ENCODE measurements at regions of chr1 and their contacts with region 1.

Region 1: GRCh38 chr1:201709564-201710295 is 119.2 kb upstream of the IPO9 start:
- DNase-seq: peak; percentile 39 to 66 (median 57)
- H3K4me3 ChIP-seq: no peak overlapping the region
- H3K27ac ChIP-seq: no peak overlapping the region
- H3K4me1 ChIP-seq: peaks cover 0 to 29% (median 8%) of the 10 kb centered on the region in 4 experiments
- H3K27me3 ChIP-seq: no peaks in the 10 kb centered on the region

Region 2: GRCh38 chr1:201399352-201400126 is 310.2 kb before region 1 on chr1:
- CTCF ChIA-PET with region 1: no interaction called
- POLR2A ChIA-PET with region 1: no interaction called
- DNase-seq: peak in 1 of 3 donors; percentile 11
- H3K4me3 ChIP-seq: peak overlapping the region in 3 of 7 experiments; percentile 38 to 57 (median 44)
- H3K27ac ChIP-seq: no peak overlapping the region
- H3K4me1 ChIP-seq: peaks cover 0 to 6% (median 3%) of the 10 kb centered on the region in 4 experiments
- H3K27me3 ChIP-seq: peaks cover 12 to 70% (median 40%) of the 10 kb centered on the region in 5 experiments

Region 3: GRCh38 chr1:201447911-201448871 is 261.5 kb before region 1 on chr1:
- CTCF ChIA-PET with region 1: no interaction called
- POLR2A ChIA-PET with region 1: no interaction called
- DNase-seq: peak; percentile 71 to 77 (median 72)
- H3K4me3 ChIP-seq: no peak overlapping the region
- H3K27ac ChIP-seq: no peak overlapping the region
- H3K4me1 ChIP-seq: peaks cover 0 to 20% (median 12%) of the 10 kb centered on the region in 4 experiments
- H3K27me3 ChIP-seq: peaks cover 0 to 1% (median 0%) of the 10 kb centered on the region in 5 experiments

Region 4: GRCh38 chr1:201530741-201531531 is 178.8 kb before region 1 on chr1:
- CTCF ChIA-PET with region 1: interaction called, 53 read pairs
- POLR2A ChIA-PET with region 1: no interaction called
- DNase-seq: peak; percentile 77 to 83 (median 79)
- H3K4me3 ChIP-seq: peak overlapping the region in 1 of 7 experiments; percentile 14
- H3K27ac ChIP-seq: no peak overlapping the region
- H3K4me1 ChIP-seq: peaks cover 0 to 38% (median 29%) of the 10 kb centered on the region in 4 experiments
- H3K27me3 ChIP-seq: no peaks in the 10 kb centered on the region

Region 5: DNA sequence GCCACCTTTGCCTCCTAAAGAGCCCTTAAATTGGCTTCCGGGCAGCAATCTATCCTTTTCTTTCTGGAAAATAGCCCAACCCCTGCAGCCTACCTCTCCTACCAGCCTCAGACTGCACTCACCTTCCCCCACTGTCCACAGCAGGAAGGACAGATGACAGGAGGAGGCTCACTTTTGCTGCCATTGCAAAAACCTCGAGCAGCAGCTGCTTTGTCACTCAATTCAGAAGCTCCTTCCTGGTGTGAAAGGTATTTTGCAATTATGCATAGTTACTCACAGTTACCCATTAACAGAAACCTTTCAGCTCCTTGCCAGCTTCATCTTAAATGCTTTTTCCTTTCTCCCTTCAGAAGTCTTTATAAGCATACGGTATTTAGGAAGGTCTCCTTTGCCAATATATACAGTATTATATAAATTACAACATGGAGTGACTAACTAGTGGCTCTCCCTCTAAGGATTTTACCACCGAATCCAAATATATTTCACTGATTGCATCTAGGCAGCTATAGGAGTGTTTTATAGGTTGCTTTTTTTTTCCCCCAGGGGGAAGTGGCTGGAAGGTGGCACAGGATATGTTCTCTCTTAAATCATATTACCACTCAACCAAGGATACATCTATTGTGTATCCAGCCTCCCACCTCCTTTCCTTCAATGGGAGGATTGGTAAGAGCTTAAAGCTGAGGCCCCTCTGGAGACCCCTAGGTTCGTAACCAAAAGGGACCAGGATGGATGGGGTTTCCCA is 22.8 kb before region 1 on chr1:
- CTCF ChIA-PET with region 1: no interaction called
- POLR2A ChIA-PET with region 1: no interaction called
- DNase-seq: peak in 2 of 3 donors; percentile 29 to 39
- H3K4me3 ChIP-seq: peak overlapping the region in 1 of 7 experiments; percentile 29
- H3K27ac ChIP-seq: no peak overlapping the region
- H3K4me1 ChIP-seq: peaks cover 4 to 15% (median 11%) of the 10 kb centered on the region in 4 experiments
- H3K27me3 ChIP-seq: no peaks in the 10 kb centered on the region

Region 6: GRCh38 chr1:201719812-201720521 is 10.2 kb after region 1 on chr1:
- CTCF ChIA-PET with region 1: interaction called, 39 read pairs
- POLR2A ChIA-PET with region 1: no interaction called
- DNase-seq: no peak
- H3K4me3 ChIP-seq: no peak overlapping the region
- H3K27ac ChIP-seq: no peak overlapping the region
- H3K4me1 ChIP-seq: peaks cover 5 to 21% (median 13%) of the 10 kb centered on the region in 4 experiments
- H3K27me3 ChIP-seq: no peaks in the 10 kb centered on the region

Region 7: DNA sequence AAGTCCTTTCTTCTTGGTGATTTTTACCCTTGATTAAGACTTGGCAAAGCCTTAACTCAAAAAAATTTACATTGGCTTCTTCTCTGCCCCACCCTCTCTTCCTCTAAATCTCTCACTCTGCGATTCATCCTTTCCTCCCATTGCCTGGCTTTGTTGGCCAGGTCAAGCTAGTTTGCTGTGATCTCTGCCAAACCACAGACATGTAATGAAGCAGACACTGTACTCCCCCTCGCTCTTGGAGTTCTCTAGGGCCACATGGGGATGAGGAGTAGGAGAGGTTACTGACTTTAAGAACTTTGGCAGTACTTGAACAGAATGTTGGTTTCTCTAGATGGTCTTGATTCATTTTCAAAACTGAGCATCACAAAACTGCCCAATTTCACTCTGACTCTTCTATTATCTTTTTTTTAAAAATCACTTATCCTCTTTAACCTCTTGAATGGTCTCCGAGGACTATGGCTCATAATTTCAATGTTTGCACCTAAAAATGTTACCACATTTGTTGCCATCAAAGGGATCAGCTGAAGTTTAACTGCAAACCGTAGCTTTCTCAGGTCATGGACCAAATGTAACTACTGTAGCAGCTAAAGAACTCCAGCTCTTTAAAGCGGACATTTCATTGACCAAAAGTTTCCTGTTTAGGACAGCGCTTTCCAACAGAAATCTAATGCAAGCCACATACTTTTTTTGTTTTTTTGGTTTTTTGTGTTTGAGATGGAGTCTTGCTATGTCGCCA is 56.6 kb after region 1 on chr1:
- CTCF ChIA-PET with region 1: interaction called, 16 read pairs
- POLR2A ChIA-PET with region 1: no interaction called
- DNase-seq: no peak
- H3K4me3 ChIP-seq: no peak overlapping the region
- H3K27ac ChIP-seq: no peak overlapping the region
- H3K4me1 ChIP-seq: no peaks in the 10 kb centered on the region
- H3K27me3 ChIP-seq: no peaks in the 10 kb centered on the region

Region 8: DNA sequence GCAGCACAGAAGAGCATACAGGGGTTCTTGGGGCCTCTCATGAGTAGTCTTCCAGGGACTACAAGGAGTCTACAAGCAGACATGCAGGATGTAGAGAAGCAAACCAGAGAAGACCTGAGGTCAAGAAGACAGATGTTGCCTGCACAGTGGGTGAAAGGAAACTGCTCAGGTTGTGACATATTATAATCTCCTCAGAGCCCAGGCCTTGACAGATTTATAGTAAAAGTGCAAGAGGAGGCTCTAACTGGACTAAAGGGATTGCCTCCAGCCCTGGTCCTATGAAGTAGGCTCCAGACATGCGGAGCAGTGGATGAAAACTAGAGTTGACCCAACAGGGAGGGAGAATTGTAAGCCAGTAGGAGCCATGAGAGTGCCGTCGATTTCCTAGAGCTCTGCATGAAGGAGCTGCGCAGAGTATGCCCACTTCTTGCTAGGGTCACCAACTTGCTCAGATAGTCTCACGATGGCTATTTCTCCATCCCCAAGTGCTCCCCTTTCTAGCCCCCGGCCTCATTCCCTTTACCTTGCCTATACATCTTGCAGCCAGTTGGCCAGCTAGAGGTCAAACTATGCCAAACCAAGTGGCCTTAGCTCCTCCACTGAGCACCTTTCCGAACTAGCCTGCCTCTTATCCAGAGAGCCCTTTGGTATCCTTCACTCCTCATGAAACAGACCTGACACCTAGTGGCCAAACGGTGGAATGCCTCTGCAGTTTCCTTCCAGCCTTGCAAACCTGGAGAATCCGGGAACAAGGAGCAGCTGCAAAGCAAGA is 83.0 kb after region 1 on chr1:
- CTCF ChIA-PET with region 1: interaction called, 350 read pairs
- POLR2A ChIA-PET with region 1: interaction called, 4 read pairs
- DNase-seq: peak; percentile 54 to 75 (median 69)
- H3K4me3 ChIP-seq: no peak overlapping the region
- H3K27ac ChIP-seq: no peak overlapping the region
- H3K4me1 ChIP-seq: peaks cover 2 to 33% (median 26%) of the 10 kb centered on the region in 4 experiments
- H3K27me3 ChIP-seq: no peaks in the 10 kb centered on the region